ENCODE measurements at regions of chr3 and their contacts with region 1.

Region 1: GRCh38 chr3:182879031-182879611 is 85.8 kb downstream of the ATP11B start:
- DNase-seq: no peak
- H3K4me3 ChIP-seq: no peak overlapping the region
- H3K4me3 Mint-ChIP-seq: no peak overlapping the region
- H3K27ac Mint-ChIP-seq: no peak overlapping the region
- H3K4me1 ChIP-seq: no peaks in the 10 kb centered on the region
- H3K4me1 Mint-ChIP-seq: no peaks in the 10 kb centered on the region
- H3K27me3 ChIP-seq: no peaks in the 10 kb centered on the region
- H3K27me3 Mint-ChIP-seq: no peaks in the 10 kb centered on the region
- CTCF ChIP-seq: no peak

Region 2: GRCh38 chr3:182829761-182830405 is 49.2 kb before region 1 on chr3:
- CTCF ChIA-PET with region 1: no interaction called
- POLR2A ChIA-PET with region 1: no interaction called
- intact Hi-C with region 1: loop called (anchors 1 kb)
- DNase-seq: no peak
- H3K4me3 ChIP-seq: no peak overlapping the region
- H3K4me3 Mint-ChIP-seq: no peak overlapping the region
- H3K27ac Mint-ChIP-seq: no peak overlapping the region
- H3K4me1 ChIP-seq: no peaks in the 10 kb centered on the region
- H3K4me1 Mint-ChIP-seq: no peaks in the 10 kb centered on the region
- H3K27me3 ChIP-seq: no peaks in the 10 kb centered on the region
- H3K27me3 Mint-ChIP-seq: no peaks in the 10 kb centered on the region
- CTCF ChIP-seq: no peak

Region 3: GRCh38 chr3:183233966-183234365 is 354.8 kb after region 1 on chr3:
- CTCF ChIA-PET with region 1: no interaction called
- POLR2A ChIA-PET with region 1: no interaction called
- intact Hi-C with region 1: no loop called
- DNase-seq: no peak
- H3K4me3 ChIP-seq: no peak overlapping the region
- H3K4me3 Mint-ChIP-seq: no peak overlapping the region
- H3K27ac Mint-ChIP-seq: no peak overlapping the region
- H3K4me1 ChIP-seq: no peaks in the 10 kb centered on the region
- H3K4me1 Mint-ChIP-seq: no peaks in the 10 kb centered on the region
- H3K27me3 ChIP-seq: no peaks in the 10 kb centered on the region
- H3K27me3 Mint-ChIP-seq: no peaks in the 10 kb centered on the region
- CTCF ChIP-seq: no peak